ENCODE measurements at regions of chr13 and their contacts with region 1.

Region 1: DNA sequence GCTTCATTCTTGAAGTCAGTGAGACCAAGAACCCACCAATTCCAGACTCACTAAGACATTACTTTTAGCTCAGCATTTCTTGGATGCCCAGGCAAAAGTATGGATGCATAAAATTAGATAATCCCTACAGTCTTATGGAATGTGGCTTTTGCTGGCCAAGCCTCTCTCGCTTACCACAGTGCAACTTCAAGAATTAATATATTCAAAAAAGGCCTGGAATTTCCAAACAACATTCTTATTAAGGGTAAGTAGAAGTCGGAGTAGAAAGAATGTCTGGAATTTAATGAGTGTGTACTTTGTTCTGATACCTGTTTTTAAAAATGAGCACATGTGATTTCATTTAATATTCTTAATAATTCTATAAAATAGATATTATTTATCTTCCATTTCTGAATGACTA is 302.4 kb upstream of the TMTC4 start:
- DNase-seq: no peak
- ATAC-seq: no peak
- H3K4me3 ChIP-seq: no peak overlapping the region
- H3K4me3 Mint-ChIP-seq: no peak overlapping the region
- H3K27ac ChIP-seq: no peak overlapping the region
- H3K27ac Mint-ChIP-seq: no peak overlapping the region
- H3K4me1 ChIP-seq: no peaks in the 10 kb centered on the region
- H3K4me1 Mint-ChIP-seq: no peaks in the 10 kb centered on the region
- H3K27me3 ChIP-seq: no peaks in the 10 kb centered on the region
- H3K27me3 Mint-ChIP-seq: peaks cover 4% of the 10 kb centered on the region
- CTCF ChIP-seq: no peak

Region 2: DNA sequence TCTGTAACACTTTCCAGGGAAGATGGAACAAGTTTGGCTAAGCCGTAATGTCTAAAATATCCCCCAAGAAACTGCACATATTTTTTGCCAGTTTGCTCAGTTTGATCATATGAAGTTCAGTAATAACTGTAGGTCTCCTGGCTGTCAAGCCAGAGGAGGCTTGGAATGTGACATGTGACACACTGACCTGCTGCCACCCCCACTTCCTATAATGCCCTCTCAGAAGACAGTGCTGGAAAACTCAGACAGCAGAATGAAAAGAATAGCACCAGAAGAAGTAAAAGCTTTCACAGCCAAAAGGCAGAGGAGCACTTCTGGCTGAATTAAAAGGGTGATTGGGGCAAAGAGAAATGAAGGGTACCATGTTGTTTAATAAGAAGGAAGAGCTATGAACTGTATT is 1843.8 kb before region 1 on chr13:
- CTCF ChIA-PET with region 1: no interaction called
- POLR2A ChIA-PET with region 1: no interaction called
- intact Hi-C with region 1: loop called in 1 of 2 experiments (anchors 10 kb)
- DNase-seq: no peak
- ATAC-seq: no peak
- H3K4me3 ChIP-seq: no peak overlapping the region
- H3K4me3 Mint-ChIP-seq: no peak overlapping the region
- H3K27ac ChIP-seq: no peak overlapping the region
- H3K27ac Mint-ChIP-seq: no peak overlapping the region
- H3K4me1 ChIP-seq: no peaks in the 10 kb centered on the region
- H3K4me1 Mint-ChIP-seq: no peaks in the 10 kb centered on the region
- H3K27me3 ChIP-seq: no peaks in the 10 kb centered on the region
- H3K27me3 Mint-ChIP-seq: no peaks in the 10 kb centered on the region
- CTCF ChIP-seq: no peak

Region 3: DNA sequence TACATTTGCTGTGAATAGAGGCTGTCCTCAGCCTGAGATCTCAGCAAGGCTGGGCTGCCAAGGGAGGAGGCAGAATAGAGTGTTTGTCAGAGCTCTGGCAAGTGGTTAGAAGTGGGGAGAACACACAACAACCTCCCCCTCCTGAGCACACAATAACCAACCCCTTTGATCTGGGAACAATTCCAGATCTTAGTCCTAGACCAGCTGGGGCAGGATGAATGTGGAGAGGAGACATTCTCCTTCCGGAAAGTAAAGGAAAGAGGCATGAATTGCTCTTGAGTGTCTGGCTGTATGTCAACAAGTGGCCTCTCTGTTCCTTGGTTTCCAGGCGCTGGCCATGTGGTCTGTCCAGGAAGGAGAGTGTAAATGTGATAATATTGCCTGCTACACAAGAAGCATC is 187.5 kb before region 1 on chr13:
- CTCF ChIA-PET with region 1: no interaction called
- POLR2A ChIA-PET with region 1: no interaction called
- intact Hi-C with region 1: no loop called
- DNase-seq: no peak
- ATAC-seq: no peak
- H3K4me3 ChIP-seq: no peak overlapping the region
- H3K4me3 Mint-ChIP-seq: no peak overlapping the region
- H3K27ac ChIP-seq: no peak overlapping the region
- H3K27ac Mint-ChIP-seq: no peak overlapping the region
- H3K4me1 ChIP-seq: no peaks in the 10 kb centered on the region
- H3K4me1 Mint-ChIP-seq: no peaks in the 10 kb centered on the region
- H3K27me3 ChIP-seq: peaks cover 0 to 2% of the 10 kb centered on the region in 2 experiments
- H3K27me3 Mint-ChIP-seq: peaks cover 33% of the 10 kb centered on the region
- CTCF ChIP-seq: no peak

Region 4: DNA sequence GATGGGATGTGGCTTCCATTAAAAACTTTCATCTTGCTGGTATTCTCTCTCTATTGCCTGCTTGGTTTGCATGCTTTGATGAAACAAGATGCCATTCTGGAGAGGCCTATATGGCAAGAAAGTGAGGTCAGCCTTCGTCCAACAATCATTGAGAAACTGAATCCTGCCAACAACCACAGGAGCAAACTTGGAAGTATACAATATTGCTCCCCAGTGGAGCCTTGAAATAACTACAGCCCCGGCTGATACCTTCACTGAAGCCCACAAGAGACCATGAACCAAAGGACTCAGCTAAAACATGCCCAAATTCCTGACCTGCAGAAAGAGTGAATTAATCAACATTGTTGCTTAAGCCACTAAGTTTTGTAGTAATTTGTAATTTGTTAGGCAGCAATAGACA is 1507.3 kb after region 1 on chr13:
- CTCF ChIA-PET with region 1: no interaction called
- POLR2A ChIA-PET with region 1: no interaction called
- intact Hi-C with region 1: no loop called
- DNase-seq: no peak
- ATAC-seq: no peak
- H3K4me3 ChIP-seq: no peak overlapping the region
- H3K4me3 Mint-ChIP-seq: no peak overlapping the region
- H3K27ac ChIP-seq: no peak overlapping the region
- H3K27ac Mint-ChIP-seq: no peak overlapping the region
- H3K4me1 ChIP-seq: no peaks in the 10 kb centered on the region
- H3K4me1 Mint-ChIP-seq: no peaks in the 10 kb centered on the region
- H3K27me3 ChIP-seq: no peaks in the 10 kb centered on the region
- H3K27me3 Mint-ChIP-seq: peaks cover 11% of the 10 kb centered on the region
- CTCF ChIP-seq: no peak